ENCODE measurements at regions of chr1 and their contacts with region 1.

Region 1: GRCh38 chr1:204544321-204544720 is 28.1 kb downstream of the MDM4 start:
- DNase-seq: no peak
- ATAC-seq: no peak
- H3K4me3 ChIP-seq: no peak overlapping the region
- H3K27ac ChIP-seq: no peak overlapping the region
- H3K4me1 ChIP-seq: no peaks in the 10 kb centered on the region
- H3K27me3 ChIP-seq: no peaks in the 10 kb centered on the region
- CTCF ChIP-seq: no peak
- POLR2A ChIP-seq: no peak

Region 2: DNA sequence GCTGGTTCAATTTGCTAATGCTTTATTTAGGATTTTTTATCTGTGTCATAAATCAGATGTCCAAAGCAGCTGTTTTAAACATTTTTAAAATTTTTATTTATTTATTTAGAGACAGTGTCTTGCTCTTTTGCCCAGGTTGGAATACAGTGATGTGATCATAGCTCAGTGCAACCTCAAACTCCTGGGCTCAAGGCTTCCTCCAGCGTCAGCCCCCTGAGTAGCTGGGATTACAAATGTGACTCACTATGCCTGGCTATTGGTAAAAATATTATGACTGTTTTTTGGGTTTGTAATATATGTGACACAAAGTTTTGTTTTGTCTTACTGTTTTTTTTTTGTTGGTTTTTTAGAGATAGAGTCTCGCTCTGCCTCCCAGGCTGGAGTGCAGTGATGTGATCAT is 737.1 kb before region 1 on chr1:
- in situ Hi-C with region 1: loop called in 1 of 4 experiments (anchors 25 kb)
- intact Hi-C with region 1: no loop called
- DNase-seq: no peak
- ATAC-seq: no peak
- H3K4me3 ChIP-seq: no peak overlapping the region
- H3K27ac ChIP-seq: peak overlapping the region in 1 of 4 donors; percentile 25
- H3K4me1 ChIP-seq: peaks cover 20 to 25% of the 10 kb centered on the region in 2 donors
- H3K27me3 ChIP-seq: no peaks in the 10 kb centered on the region
- CTCF ChIP-seq: no peak
- POLR2A ChIP-seq: no peak

Region 3: DNA sequence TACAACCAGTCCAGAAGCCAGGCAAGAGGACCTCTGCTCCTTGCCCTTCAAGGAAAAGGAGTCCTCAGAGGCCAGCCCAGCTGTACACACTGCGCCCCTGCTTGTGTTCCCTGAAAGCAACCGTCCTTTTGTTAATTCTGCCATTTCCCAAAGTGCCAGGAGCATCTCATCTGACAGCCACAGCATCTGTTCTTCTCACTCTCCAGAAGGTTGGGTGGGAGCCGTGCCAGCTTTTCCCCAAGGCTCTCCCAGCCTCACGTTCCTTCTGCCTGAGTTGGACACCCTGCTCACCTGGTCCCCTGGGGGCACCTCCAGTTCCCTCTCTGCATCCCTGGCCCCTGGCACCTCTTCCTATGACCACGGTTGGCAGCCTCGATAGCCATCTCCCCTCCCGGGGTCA is 488.2 kb after region 1 on chr1:
- in situ Hi-C with region 1: no loop called
- intact Hi-C with region 1: no loop called
- DNase-seq: no peak
- ATAC-seq: no peak
- H3K4me3 ChIP-seq: no peak overlapping the region
- H3K27ac ChIP-seq: no peak overlapping the region
- H3K4me1 ChIP-seq: no peaks in the 10 kb centered on the region
- H3K27me3 ChIP-seq: peaks cover 0 to 2% (median 0%) of the 10 kb centered on the region in 3 donors
- CTCF ChIP-seq: no peak
- POLR2A ChIP-seq: no peak

Measured in gastrocnemius medialis (tissue), 4 donors.